BJ (cell line): ENCODE measurements at regions of chr11 and their contacts with region 1.

Region 1: DNA sequence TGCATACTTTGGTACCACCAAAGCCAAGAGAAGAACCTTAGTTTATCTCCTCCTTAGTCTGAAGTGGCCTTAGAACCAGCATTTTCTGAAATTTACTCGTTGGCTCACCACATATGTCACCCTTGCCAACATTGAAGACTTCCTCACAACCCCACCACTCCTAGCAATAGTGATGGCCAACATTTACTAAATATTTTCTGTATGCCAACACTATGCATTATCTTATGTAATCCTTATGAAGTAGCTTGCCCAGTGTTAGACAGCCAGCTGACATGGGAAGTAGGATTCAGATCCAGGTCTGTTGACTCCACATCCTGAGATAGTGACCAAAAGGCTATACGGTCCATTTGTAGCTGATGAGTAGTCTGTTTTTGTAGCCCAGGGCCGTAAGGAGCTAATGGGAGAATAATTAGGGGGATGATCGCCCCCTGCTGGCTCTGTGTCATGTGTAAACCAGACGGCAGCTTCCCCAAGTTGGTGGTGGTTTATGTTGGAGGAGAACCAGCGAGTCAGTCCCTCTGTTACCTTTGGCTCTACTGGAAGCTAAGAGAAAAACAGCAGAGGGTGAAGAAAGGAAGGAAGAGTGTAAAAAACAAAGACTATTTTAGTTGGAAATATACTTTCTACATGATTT is 120.5 kb upstream of the RASSF10 start:
- DNase-seq: peak; percentile 46
- H3K4me3 ChIP-seq: no peak overlapping the region
- H3K27me3 ChIP-seq: no peaks in the 10 kb centered on the region
- CTCF ChIP-seq: peak; percentile 72

Region 2: DNA sequence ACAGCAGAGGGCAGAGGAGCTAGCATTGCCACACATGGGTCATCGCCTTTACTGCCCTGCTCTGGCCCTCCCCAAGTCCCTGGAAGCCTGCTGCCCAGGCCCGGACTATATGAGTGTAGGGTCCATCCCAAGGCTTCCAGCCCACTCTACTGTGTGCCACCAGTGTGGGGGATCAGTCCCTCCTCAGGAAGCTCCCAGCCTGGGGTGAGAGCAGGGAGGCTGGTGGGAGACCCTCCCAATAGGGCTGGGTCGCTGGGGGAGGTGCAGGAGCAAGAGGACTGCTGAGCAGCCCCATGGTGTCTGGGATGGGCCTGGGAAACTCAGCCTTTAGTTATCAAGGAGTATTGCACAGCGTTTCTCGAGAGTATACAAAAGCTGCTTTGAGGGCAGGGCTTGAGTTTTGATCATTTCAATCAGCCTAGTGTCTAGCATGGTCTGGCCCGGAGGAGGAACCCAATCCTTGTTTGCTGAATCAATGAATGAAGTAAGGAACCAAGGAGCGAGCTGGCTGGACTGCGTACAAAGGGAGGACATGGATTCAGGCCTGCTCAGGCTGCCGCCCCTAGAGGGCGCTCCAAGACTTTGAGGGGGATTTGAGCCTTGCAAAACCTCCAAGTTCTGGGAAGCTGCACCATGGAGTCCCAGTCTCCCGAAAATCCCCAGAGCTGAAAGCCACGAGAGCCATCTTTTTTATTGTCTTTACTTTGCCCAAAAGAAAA is 600.3 kb before region 1 on chr11:
- CTCF ChIA-PET with region 1: interaction called, 15 read pairs
- POLR2A ChIA-PET with region 1: no interaction called
- DNase-seq: peak; percentile 64
- H3K4me3 ChIP-seq: no peak overlapping the region
- H3K27me3 ChIP-seq: no peaks in the 10 kb centered on the region
- CTCF ChIP-seq: peak; percentile 98

Region 3: GRCh38 chr11:12331239-12331874 is 557.3 kb before region 1 on chr11:
- CTCF ChIA-PET with region 1: interaction called, 19 read pairs
- POLR2A ChIA-PET with region 1: no interaction called
- DNase-seq: peak; percentile 40
- H3K4me3 ChIP-seq: no peak overlapping the region
- H3K27me3 ChIP-seq: no peaks in the 10 kb centered on the region
- CTCF ChIP-seq: peak; percentile 69

Region 4: DNA sequence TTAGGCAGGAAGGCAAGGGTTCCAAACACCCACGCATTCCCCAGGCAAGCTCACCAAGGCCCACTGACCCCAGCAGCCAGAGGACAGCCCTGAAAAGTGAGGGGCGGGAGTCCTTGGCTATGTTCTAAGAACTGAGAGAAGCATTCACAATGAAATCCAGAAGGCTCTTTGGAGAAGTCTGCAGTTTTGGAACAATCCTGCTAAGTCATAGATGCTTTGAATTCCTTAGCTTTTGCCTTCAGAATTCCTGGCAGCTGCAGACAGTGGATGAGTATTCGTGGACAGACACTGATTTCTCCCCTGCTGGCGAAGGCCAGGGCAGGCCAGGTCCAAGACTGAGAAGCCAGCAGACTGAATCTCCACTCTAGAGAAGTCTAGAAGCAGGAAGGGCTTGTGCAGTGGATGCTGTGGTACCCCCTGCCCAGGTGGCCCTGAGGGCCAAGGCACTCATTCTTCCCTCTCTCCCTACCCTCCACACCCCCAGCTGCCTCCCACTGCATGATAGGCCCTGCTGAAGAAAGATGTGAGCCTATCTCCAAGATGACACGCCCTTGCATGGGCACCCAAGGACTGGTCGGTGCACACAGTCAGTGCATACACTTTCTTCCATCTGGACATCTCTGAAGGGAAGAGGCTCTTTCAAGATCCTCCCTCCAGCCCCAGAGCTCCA is 347.6 kb before region 1 on chr11:
- CTCF ChIA-PET with region 1: interaction called, 10 read pairs
- POLR2A ChIA-PET with region 1: no interaction called
- DNase-seq: peak; percentile 83
- H3K4me3 ChIP-seq: no peak overlapping the region
- H3K27me3 ChIP-seq: no peaks in the 10 kb centered on the region
- CTCF ChIP-seq: peak; percentile 71

Region 5: DNA sequence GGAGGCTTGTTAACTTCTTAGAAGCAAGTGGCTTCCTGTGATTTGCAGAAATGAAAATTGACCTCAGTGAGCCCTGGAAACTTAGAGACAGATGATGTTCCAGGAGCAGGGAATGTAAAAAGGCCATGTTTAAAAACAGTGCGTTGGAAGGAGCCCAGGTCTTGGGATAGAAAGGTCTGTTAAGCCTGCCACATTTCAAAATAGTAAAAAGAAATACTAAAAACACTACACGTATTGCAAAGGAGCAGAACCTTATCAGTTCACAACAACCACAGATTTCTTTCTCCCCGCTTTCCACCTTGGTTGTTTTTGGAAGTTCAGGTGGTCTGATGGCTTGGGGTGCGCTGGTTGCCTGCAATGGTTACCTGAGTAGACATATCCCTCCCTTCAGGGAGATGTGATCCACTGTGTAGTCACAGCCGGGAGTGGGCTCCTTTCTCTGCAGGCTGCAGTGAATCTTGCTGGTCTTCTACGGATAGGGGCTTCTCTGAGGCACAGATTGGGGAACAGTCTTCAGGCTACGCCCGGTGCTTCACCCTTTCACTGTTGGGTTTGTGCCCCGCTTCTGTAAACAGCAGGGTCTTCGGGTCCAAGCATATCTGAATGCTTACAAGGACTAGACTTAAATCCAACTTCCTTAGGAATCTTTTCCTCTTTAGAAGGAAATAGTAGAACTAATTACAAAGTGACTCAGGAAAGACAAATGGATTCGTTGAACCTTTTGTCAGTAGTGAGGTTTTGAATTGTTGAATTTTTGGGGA is 212.5 kb before region 1 on chr11:
- CTCF ChIA-PET with region 1: interaction called, 16 read pairs
- POLR2A ChIA-PET with region 1: no interaction called
- DNase-seq: no peak
- H3K4me3 ChIP-seq: peak overlapping the region; percentile 61
- H3K27me3 ChIP-seq: no peaks in the 10 kb centered on the region
- CTCF ChIP-seq: no peak

Region 6: DNA sequence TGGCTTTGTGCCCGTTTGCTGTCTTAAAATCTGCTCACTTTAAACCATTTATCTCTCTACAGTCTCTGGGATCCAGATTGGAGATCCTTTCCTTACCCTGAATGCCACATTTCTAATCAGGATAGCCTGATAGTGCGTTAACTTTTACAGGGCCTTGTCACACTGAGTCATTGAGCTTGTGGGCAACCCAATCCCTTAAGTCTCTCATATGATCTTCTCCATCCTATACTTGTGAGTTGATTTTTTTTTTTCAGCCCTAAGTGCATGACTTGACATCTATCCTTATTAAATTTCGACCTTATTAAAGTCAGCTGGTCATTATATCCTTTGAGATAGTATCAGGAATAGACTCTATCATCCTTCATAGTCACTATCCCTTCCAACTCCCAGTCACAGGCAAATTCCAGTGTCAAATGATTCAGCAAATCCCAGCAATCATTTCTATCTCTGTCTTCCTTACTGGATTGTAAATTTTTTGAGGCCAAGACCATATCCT is 156.8 kb before region 1 on chr11:
- CTCF ChIA-PET with region 1: no interaction called
- POLR2A ChIA-PET with region 1: interaction called, 28 read pairs
- DNase-seq: peak; percentile 63
- H3K4me3 ChIP-seq: no peak overlapping the region
- H3K27me3 ChIP-seq: no peaks in the 10 kb centered on the region
- CTCF ChIP-seq: no peak

Region 7: GRCh38 chr11:12868315-12869073 is 20.1 kb before region 1 on chr11:
- CTCF ChIA-PET with region 1: interaction called, 19 read pairs
- POLR2A ChIA-PET with region 1: interaction called, 3 read pairs
- DNase-seq: no peak
- H3K4me3 ChIP-seq: no peak overlapping the region
- H3K27me3 ChIP-seq: no peaks in the 10 kb centered on the region
- CTCF ChIP-seq: peak; percentile 29; the same call in 1 of the 2 replicates